Activated CD8-positive, alpha-beta T cell treated with anti-CD3 and anti-CD28 coated beads for 36 hours (primary cell): ENCODE measurements at regions of chr2 and their contacts with region 1.

Region 1: DNA sequence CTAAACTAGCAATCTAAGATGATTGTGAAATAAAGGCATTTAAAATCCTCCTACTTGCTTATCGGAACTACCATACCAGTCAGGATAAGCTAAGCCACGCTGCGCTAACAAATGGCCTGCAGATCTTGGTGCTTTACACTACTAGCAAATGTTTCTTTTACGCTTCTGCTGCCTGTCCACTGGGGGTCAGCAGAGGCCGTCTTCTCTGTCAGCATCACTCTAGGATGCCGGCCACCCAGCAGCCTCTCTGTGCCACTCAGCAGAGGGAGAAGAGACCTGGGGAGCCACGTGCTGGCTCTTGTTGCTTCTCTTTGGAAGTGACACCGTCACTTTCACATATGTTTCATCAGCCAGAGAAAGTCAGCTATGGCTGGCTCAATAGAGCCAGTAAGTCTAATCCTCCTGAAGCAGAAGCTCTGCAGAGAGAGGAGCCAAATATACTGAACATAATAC is 36.6 kb downstream of the COPS8 start:
- DNase-seq: peak; percentile 75
- ATAC-seq: peak; percentile 100
- H3K4me3 Mint-ChIP-seq: no peak overlapping the region
- H3K27ac Mint-ChIP-seq: peak overlapping the region; percentile 65
- H3K4me1 Mint-ChIP-seq: peaks cover 3% of the 10 kb centered on the region
- H3K27me3 Mint-ChIP-seq: peaks cover 2% of the 10 kb centered on the region
- CTCF ChIP-seq: peak; percentile 68

Region 2: DNA sequence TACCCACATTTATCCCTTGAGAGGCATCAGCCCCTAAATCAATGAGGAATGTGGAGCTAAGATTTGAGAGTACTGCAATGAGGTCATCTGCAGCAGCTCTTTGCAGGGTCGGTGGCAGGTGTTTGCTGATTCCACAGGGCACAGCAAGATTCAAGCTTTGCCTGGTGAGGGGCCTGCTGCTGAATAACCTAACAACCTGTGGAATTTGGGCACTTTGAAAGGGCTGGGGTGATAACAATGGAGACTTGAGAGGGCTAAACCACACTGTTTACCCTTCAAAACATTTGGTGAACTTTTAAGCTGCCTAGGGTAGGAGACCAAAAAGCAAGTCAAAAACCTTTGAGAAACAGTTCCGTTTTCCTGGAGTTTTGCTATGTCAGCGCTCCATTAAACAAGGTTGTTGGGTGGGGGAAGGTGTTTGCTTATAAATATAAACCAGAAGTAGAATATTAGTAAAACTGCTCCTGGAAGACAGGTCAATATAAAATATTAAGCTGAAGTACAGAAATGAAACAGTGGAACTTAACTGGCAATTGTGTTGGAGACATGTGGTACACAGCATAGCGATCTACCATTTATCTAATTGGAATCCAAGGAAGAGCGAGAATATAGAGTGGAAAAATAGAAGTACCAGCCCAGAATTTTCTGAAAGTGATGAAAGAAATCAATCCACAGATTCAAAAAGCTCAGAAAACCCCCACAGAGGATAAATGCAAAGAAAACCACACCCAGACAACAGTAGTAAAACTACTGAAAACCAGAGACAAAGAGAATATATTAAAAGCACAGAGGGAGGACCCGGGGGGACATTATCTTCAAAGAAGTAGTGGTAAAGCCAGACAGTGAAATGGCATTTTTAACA is 20.9 kb before region 1 on chr2:
- CTCF ChIA-PET with region 1: no interaction called
- POLR2A ChIA-PET with region 1: no interaction called
- intact Hi-C with region 1: no loop called
- DNase-seq: no peak
- ATAC-seq: no peak
- H3K4me3 Mint-ChIP-seq: no peak overlapping the region
- H3K27ac Mint-ChIP-seq: no peak overlapping the region
- H3K4me1 Mint-ChIP-seq: no peaks in the 10 kb centered on the region
- H3K27me3 Mint-ChIP-seq: no peaks in the 10 kb centered on the region
- CTCF ChIP-seq: no peak

Region 3: GRCh38 chr2:237132799-237133198 is 10.6 kb after region 1 on chr2:
- CTCF ChIA-PET with region 1: interaction called, 18 read pairs
- POLR2A ChIA-PET with region 1: no interaction called
- intact Hi-C with region 1: no loop called
- DNase-seq: no peak
- ATAC-seq: no peak
- H3K4me3 Mint-ChIP-seq: no peak overlapping the region
- H3K27ac Mint-ChIP-seq: no peak overlapping the region
- H3K4me1 Mint-ChIP-seq: no peaks in the 10 kb centered on the region
- H3K27me3 Mint-ChIP-seq: no peaks in the 10 kb centered on the region
- CTCF ChIP-seq: peak; percentile 49

Region 4: GRCh38 chr2:237345891-237346640 is 223.8 kb after region 1 on chr2:
- CTCF ChIA-PET with region 1: no interaction called
- POLR2A ChIA-PET with region 1: no interaction called
- intact Hi-C with region 1: no loop called
- DNase-seq: no peak
- ATAC-seq: no peak
- H3K4me3 Mint-ChIP-seq: no peak overlapping the region
- H3K27ac Mint-ChIP-seq: no peak overlapping the region
- H3K4me1 Mint-ChIP-seq: no peaks in the 10 kb centered on the region
- H3K27me3 Mint-ChIP-seq: no peaks in the 10 kb centered on the region
- CTCF ChIP-seq: no peak